ENCODE measurements at regions of chr7 and their contacts with region 1.

Region 1: DNA sequence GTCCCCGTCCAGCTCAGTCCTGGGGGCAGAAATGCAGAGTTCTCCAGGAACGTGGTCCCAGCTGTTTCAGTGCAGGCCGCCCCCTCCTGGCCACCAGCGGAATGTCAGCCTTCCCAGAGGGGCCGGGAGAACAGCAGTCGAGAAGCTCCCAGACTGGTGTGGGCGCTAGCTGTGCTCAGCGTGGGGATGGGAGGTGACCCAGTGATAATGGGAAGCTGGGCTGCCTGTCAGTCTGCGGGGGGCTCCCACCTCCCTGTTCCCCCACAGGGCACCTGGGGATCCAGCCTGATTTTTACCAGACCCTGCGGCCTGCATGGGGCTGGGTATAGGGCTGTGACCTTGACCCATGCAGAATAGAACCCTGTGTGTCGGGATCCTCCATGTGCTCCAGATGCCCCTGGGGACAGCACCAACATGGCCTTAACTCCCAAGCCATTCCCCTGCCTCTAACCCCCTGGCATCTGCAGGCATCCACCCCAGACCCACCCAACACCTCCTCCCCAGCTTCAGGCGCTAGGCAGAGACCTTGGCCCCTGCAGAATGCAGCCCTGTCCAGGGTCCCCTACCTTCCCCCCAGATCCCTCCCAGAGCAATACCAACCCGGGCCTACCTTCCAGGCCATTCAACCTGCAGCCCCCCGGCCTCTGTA is 946 bp upstream of the ELN start:
- DNase-seq: peak; percentile 67
- H3K4me3 ChIP-seq: peak overlapping the region in 1 of 2 donors; percentile 36
- H3K27ac ChIP-seq: peak overlapping the region; percentile 72 to 78
- H3K4me1 ChIP-seq: peaks cover 7% of the 10 kb centered on the region
- H3K27me3 ChIP-seq: no peaks in the 10 kb centered on the region
- CTCF ChIP-seq: peak; percentile 84 to 98 (median 90)
- POLR2A ChIP-seq: no peak

Region 2: GRCh38 chr7:73865738-73866445 is 161.1 kb before region 1 on chr7:
- intact Hi-C with region 1: loop called (anchors 2 kb)
- DNase-seq: peak; percentile 24
- H3K4me3 ChIP-seq: no peak overlapping the region
- H3K27ac ChIP-seq: no peak overlapping the region
- H3K4me1 ChIP-seq: no peaks in the 10 kb centered on the region
- H3K27me3 ChIP-seq: no peaks in the 10 kb centered on the region
- CTCF ChIP-seq: peak; percentile 43 to 72 (median 54)
- POLR2A ChIP-seq: no peak

Region 3: GRCh38 chr7:73894733-73895551 is 132.1 kb before region 1 on chr7:
- intact Hi-C with region 1: loop called (anchors 2 kb)
- DNase-seq: no peak
- H3K4me3 ChIP-seq: no peak overlapping the region
- H3K27ac ChIP-seq: no peak overlapping the region
- H3K4me1 ChIP-seq: peaks cover 7% of the 10 kb centered on the region
- H3K27me3 ChIP-seq: no peaks in the 10 kb centered on the region
- CTCF ChIP-seq: no peak
- POLR2A ChIP-seq: no peak

Region 4: DNA sequence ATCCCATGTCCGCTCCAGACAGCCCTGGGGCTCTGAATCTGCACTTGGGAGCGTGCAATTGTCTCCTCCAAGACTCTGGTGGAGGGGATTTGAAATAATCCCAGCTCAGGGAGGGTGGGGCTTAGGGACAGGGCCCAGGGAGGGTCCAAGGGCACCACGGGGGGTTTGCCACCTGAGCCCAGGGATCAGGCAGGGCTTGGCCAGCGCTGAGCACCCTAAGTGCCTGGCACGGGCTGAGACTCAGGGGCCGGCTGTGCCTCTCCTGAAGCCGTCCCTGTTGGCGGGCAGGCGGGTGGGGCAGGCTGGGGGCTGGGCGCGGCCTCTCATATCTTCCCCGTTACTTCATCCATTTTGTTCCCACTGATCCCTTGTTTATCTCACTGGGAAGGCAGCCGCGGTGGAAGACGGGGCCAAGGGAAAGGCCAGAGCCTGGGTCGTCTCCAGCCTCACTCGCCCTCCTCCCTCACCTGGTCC is 40.8 kb before region 1 on chr7:
- intact Hi-C with region 1: loop called (anchors 5 kb)
- DNase-seq: no peak
- H3K4me3 ChIP-seq: no peak overlapping the region
- H3K27ac ChIP-seq: no peak overlapping the region
- H3K4me1 ChIP-seq: no peaks in the 10 kb centered on the region
- H3K27me3 ChIP-seq: no peaks in the 10 kb centered on the region
- CTCF ChIP-seq: no peak
- POLR2A ChIP-seq: no peak